ENCODE measurements at regions of chr7 and their contacts with region 1.

Region 1: DNA sequence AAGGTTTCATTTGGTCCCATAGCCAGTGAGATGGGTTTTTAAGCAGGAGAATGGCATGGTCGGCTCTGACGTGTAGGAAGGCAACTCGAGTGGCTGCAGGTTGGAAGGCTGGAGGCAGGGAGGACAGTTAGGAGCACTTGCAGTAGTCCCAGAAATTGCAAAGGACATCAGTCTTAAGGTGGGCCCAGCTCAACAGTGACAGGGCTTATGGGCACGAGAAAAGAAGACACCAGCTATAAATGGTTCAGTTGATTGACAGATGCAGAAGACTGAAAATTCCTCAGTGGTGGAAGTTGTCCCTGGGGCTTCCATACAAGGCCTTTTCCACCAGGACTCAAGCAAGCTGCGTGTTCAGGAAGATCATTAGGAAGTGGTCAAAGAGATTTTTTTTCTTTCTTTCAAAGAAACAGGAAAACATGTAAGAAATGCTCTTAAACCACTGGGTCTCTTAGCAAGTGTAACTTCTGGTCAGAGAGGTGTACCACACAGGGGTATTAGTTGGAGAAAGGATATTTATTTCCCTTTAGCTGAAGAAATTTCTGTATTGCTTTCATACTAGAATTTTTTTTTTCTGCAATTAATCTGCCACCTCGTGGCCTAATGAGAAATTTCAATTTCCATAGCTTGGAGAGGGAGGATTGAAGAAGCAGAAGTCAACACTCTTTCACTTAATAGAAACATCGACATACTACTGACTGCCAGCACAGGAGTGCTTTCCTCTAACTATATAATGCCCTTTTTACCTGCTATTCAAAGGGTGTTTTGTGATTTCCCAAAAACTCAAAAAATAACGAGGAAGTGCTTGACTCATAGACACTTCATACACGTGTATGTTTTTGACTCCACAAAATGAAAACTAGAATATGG is 177.4 kb upstream of the NAMPT start:
- DNase-seq: peak; percentile 81
- ATAC-seq: peak; percentile 59
- H3K4me3 ChIP-seq: no peak overlapping the region
- H3K27ac ChIP-seq: no peak overlapping the region
- H3K4me1 ChIP-seq: peaks cover 28% of the 10 kb centered on the region
- H3K27me3 ChIP-seq: no peaks in the 10 kb centered on the region
- CTCF ChIP-seq: peak; percentile 82

Region 2: DNA sequence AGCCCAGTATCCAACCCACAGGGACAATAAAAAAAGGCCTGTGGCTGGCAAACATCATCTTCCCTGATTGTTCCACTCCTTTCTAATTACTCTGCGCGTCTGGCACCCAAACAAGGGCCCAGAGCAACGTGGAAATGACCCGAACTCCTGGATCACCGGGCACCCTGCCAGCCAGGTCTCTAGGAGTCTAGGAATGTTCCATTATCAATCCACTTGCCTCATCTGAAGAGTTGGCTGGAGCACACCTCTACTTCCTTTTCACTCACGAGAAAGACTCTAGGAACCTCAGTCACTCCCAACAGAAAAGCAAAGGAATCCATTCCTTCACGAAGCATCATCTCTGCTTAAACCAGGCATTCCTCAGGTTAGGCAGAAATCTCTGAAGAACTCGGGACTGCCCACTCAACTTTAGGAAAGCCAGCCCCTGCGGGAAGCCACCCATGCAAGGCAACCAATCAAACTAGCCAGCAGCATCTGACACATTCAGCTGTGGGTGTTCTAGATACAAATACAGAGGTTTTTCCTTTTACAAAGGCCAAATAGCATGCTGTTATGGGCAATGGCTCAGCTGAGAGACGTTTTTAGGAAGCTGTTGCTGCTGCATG is 623.5 kb before region 1 on chr7:
- CTCF ChIA-PET with region 1: no interaction called
- POLR2A ChIA-PET with region 1: no interaction called
- intact Hi-C with region 1: no loop called
- DNase-seq: no peak
- ATAC-seq: no peak
- H3K4me3 ChIP-seq: no peak overlapping the region
- H3K27ac ChIP-seq: no peak overlapping the region
- H3K4me1 ChIP-seq: no peaks in the 10 kb centered on the region
- H3K27me3 ChIP-seq: no peaks in the 10 kb centered on the region
- CTCF ChIP-seq: no peak

Region 3: DNA sequence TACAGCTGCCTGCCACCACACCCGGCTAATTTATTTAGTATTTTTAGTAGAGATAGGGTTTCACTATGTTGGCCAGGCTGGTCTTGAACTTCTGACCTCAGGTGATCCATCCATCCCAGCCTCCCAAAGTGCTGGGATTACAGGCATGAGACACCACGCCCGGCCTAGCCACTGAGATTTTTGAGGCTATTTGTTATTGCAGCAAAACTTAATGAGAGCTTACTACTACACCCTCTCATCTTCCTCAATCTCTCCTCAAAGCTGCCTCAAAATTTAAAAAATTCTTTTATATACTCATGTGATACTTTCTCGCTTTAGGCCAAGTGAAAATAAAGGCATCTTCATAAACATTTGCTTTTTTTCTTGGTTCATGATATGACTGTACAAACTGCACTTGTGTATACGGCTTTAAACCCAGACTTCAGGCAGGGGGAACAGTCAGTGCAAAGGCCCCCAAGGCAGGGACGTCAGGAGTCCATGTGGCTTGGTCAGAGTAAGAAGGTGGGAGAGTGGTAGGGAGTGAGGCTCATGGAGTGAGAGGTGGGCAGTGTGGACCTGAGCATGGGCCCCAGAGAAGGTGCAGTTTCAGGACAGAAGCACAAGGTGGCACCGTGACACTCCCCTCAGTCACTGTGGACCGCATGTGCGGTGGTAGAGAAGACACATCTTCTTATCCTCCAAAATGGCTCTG is 405.6 kb before region 1 on chr7:
- CTCF ChIA-PET with region 1: no interaction called
- POLR2A ChIA-PET with region 1: no interaction called
- intact Hi-C with region 1: loop called (anchors 10 kb)
- DNase-seq: peak; percentile 92
- ATAC-seq: peak; percentile 95
- H3K4me3 ChIP-seq: no peak overlapping the region
- H3K27ac ChIP-seq: no peak overlapping the region
- H3K4me1 ChIP-seq: peaks cover 21% of the 10 kb centered on the region
- H3K27me3 ChIP-seq: no peaks in the 10 kb centered on the region
- CTCF ChIP-seq: peak; percentile 98

Region 4: GRCh38 chr7:106313456-106313901 is 148.7 kb before region 1 on chr7:
- CTCF ChIA-PET with region 1: interaction called, 11 read pairs
- POLR2A ChIA-PET with region 1: no interaction called
- intact Hi-C with region 1: loop called (anchors 1 kb)
- DNase-seq: peak; percentile 92
- ATAC-seq: peak; percentile 88
- H3K4me3 ChIP-seq: peak overlapping the region; percentile 41
- H3K27ac ChIP-seq: peak overlapping the region; percentile 72
- H3K4me1 ChIP-seq: peaks cover 50% of the 10 kb centered on the region
- H3K27me3 ChIP-seq: no peaks in the 10 kb centered on the region
- CTCF ChIP-seq: no peak

Region 5: GRCh38 chr7:106346678-106347217 is 115.5 kb before region 1 on chr7:
- CTCF ChIA-PET with region 1: no interaction called
- POLR2A ChIA-PET with region 1: no interaction called
- intact Hi-C with region 1: loop called (anchors 5 kb)
- DNase-seq: peak; percentile 98
- ATAC-seq: peak; percentile 91
- H3K4me3 ChIP-seq: no peak overlapping the region
- H3K27ac ChIP-seq: peak overlapping the region; percentile 52
- H3K4me1 ChIP-seq: peaks cover 28% of the 10 kb centered on the region
- H3K27me3 ChIP-seq: no peaks in the 10 kb centered on the region
- CTCF ChIP-seq: no peak

Region 6: DNA sequence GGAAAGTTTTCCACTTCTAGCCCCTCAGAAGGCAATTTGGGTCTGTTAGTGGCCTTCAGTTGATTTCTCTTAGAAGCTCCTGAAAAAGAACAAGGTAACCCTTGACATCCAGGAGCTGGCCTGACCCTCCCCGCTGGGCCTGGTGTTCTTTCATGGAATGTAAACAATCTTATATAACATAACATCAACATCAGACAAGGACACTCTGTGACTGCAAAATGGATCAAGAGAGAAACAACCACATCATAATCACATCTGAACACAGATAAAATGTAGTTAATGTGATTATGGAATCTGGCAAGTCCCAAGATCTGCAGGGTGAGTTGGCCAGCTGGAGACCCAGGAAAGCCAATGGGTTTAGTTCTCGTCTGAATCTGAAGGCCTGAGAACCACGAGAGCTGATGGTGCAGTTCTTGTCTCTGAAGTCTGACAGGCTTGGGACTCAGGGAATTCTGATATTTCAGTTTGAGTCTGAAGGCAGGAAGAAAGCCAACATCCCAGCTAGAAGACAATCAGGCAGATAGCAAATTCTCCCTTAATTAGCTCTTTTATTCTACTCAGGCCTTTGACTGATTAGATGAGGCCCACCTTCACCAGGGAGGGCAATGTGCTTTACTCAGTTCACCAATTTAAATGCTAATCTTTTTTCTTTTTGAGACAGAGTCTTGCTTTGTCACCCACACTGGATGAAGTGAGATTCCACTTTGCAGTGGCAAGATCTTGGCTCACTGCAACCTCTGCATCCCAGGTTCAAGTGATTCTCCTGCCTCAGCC is 86.0 kb before region 1 on chr7:
- CTCF ChIA-PET with region 1: no interaction called
- POLR2A ChIA-PET with region 1: interaction called, 11 read pairs
- intact Hi-C with region 1: no loop called
- DNase-seq: no peak
- ATAC-seq: no peak
- H3K4me3 ChIP-seq: no peak overlapping the region
- H3K27ac ChIP-seq: no peak overlapping the region
- H3K4me1 ChIP-seq: no peaks in the 10 kb centered on the region
- H3K27me3 ChIP-seq: no peaks in the 10 kb centered on the region
- CTCF ChIP-seq: no peak

Region 7: DNA sequence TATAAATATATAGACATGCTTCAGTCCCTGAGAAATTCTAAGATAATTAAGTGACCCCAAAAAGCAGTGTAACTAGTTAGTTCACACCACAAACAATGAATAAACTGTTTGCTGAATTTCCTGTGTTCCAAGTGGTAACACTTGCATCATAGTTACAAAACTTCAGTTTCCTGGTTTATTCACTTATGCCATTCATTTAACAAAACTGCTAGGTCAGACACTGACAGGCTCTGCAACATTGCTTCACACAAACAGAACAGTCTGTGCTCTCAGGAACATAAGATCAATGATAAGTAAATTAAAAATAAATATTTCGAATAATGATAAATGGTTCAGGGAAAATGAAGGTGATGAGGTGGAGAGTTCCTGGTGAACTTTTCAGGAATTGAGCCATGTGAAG is 44.1 kb before region 1 on chr7:
- CTCF ChIA-PET with region 1: no interaction called
- POLR2A ChIA-PET with region 1: no interaction called
- intact Hi-C with region 1: no loop called
- DNase-seq: no peak
- ATAC-seq: no peak
- H3K4me3 ChIP-seq: no peak overlapping the region
- H3K27ac ChIP-seq: no peak overlapping the region
- H3K4me1 ChIP-seq: peaks cover 18% of the 10 kb centered on the region
- H3K27me3 ChIP-seq: no peaks in the 10 kb centered on the region
- CTCF ChIP-seq: no peak

Region 8: DNA sequence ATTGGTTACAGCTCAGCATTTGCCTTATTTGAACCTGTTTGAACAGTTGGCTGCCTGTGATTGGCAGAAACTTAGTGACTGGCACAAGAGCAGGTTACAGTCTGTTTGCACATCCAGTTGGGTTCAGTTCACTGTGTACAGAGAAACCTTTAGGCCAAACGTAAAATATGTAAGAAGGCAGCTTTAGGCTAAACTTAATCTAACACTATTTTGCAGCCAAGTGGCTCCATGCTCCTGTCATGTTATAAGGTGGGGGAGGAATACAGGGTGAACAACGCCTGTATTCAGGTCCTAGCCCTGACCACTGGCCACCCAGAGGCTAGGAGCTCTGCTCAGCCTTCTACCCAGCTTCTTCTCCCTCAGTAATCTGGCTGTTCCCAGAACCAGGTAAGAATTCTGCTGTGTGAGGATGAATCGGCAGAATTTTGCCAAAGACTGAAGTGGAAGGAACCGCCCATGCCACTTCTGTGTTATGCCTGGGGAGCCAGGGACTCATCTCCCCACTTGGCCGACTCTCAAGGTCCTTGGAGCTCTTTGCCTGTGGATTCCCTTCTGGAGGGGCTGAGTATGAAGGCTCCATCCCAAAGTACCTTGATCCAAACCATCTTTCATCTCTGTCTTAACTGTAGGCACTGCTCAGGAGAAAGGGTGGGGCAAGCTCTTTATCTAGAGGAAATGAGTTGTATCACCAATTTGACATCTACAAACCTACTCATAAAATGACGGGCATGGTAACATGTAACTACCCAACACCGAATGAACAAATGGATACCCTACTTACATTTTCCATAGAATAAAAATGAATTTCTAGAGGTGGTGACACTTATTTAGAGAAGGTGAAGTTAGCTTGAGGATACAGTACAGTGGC is 13.0 kb before region 1 on chr7:
- CTCF ChIA-PET with region 1: no interaction called
- POLR2A ChIA-PET with region 1: no interaction called
- intact Hi-C with region 1: no loop called
- DNase-seq: no peak
- ATAC-seq: no peak
- H3K4me3 ChIP-seq: no peak overlapping the region
- H3K27ac ChIP-seq: no peak overlapping the region
- H3K4me1 ChIP-seq: no peaks in the 10 kb centered on the region
- H3K27me3 ChIP-seq: no peaks in the 10 kb centered on the region
- CTCF ChIP-seq: no peak

Region 9: GRCh38 chr7:106736508-106737201 is 274.4 kb after region 1 on chr7:
- CTCF ChIA-PET with region 1: interaction called, 3 read pairs
- POLR2A ChIA-PET with region 1: no interaction called
- intact Hi-C with region 1: loop called (anchors 2 kb)
- DNase-seq: peak; percentile 72
- ATAC-seq: peak; percentile 97
- H3K4me3 ChIP-seq: no peak overlapping the region
- H3K27ac ChIP-seq: no peak overlapping the region
- H3K4me1 ChIP-seq: no peaks in the 10 kb centered on the region
- H3K27me3 ChIP-seq: no peaks in the 10 kb centered on the region
- CTCF ChIP-seq: peak; percentile 73

Measured in PC-3 (cell line).